ENCODE measurements at regions of chr7 and their contacts with region 1.

Region 1: GRCh38 chr7:87059525-87060287 is at the start of gene ELAPOR2:
- DNase-seq: peak; percentile 98
- H3K4me3 ChIP-seq: peak within 1 kb of the TSS; percentile 81 to 90
- H3K27ac ChIP-seq: peak within 1 kb of the TSS in 1 of 2 experiments; percentile 87; a peak in 2 of 4 replicates
- H3K4me1 ChIP-seq: peaks cover 0 to 14% of the 10 kb centered on the region in 2 experiments; a peak in 2 of 4 replicates
- H3K27me3 ChIP-seq: no peaks in the 10 kb centered on the region
- CTCF ChIP-seq: peak; percentile 55
- EP300 ChIP-seq: peak in 1 of 2 experiments; percentile 29; a peak in 1 of 4 replicates
- RAD21 ChIP-seq: peak; percentile 64
- polyA plus RNA-seq, gene ELAPOR2: 8.8 and 15.9 TPM in 2 replicates

Region 2: GRCh38 chr7:86720306-86720705 is 339.4 kb before region 1 on chr7:
- CTCF ChIA-PET with region 1: no interaction called
- POLR2A ChIA-PET with region 1: no interaction called
- DNase-seq: no peak
- H3K4me3 ChIP-seq: no peak overlapping the region
- H3K27ac ChIP-seq: no peak overlapping the region
- H3K4me1 ChIP-seq: no peaks in the 10 kb centered on the region; a peak in 1 of 4 replicates
- H3K27me3 ChIP-seq: no peaks in the 10 kb centered on the region
- CTCF ChIP-seq: no peak
- EP300 ChIP-seq: no peak
- RAD21 ChIP-seq: no peak

Region 3: DNA sequence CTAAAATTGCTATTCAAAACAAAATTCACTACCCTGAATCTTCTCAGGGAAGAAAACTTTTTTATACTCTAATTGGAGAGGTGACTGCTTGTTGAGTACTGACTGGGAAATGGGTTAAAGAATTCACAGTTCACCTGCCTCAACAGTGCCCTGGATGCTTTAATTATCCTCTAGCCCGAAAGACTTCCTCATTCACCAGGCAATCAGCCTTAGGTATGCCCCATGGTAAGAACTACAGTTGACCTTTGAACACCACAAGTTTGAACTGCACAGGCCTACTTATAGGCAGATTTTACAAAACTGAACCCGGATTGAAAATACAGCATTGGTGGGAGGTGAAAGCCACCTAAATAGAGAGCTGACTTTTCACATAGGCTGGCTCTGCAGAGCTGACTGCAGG is 175.6 kb before region 1 on chr7:
- CTCF ChIA-PET with region 1: no interaction called
- POLR2A ChIA-PET with region 1: no interaction called
- DNase-seq: no peak
- H3K4me3 ChIP-seq: no peak overlapping the region
- H3K27ac ChIP-seq: no peak overlapping the region
- H3K4me1 ChIP-seq: no peaks in the 10 kb centered on the region
- H3K27me3 ChIP-seq: no peaks in the 10 kb centered on the region
- CTCF ChIP-seq: no peak
- EP300 ChIP-seq: no peak
- RAD21 ChIP-seq: no peak

Region 4: DNA sequence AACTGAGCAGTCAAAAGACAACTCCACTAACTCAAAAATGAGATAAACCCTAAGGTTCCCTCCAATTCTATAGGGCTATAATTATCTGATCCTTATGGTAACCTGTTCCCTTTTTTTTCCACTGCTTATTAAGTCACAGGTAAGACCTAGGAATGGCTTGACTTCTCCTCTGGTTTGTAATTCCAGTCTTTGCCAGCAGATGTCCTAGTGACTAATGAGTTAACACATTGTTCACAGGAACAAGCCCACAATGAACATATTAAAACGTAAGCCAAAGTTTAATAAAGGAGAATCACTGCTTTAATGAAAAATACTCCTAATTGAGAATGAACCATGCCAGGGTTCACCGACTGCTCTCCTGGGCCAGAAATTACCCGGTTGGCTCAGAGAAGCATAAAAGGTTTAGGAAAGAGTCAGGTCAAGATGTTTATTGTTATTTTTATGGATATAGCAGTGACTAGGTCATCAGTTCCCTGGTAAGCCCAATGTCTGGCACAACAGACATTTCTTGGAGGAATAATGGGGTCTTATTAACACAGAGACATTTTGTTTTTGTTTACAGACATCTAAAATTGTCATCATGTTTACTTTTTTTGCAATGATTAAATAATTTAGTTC is 120.4 kb before region 1 on chr7:
- CTCF ChIA-PET with region 1: interaction called, 16 read pairs
- POLR2A ChIA-PET with region 1: no interaction called
- DNase-seq: peak; percentile 36
- H3K4me3 ChIP-seq: no peak overlapping the region
- H3K27ac ChIP-seq: no peak overlapping the region
- H3K4me1 ChIP-seq: peaks cover 0 to 11% of the 10 kb centered on the region in 2 experiments; a peak in 2 of 4 replicates
- H3K27me3 ChIP-seq: no peaks in the 10 kb centered on the region
- CTCF ChIP-seq: peak; percentile 91
- EP300 ChIP-seq: no peak
- RAD21 ChIP-seq: peak; percentile 83

Region 5: GRCh38 chr7:87013836-87014182 is 45.9 kb before region 1 on chr7:
- CTCF ChIA-PET with region 1: interaction called, 11 read pairs
- POLR2A ChIA-PET with region 1: no interaction called
- DNase-seq: no peak
- H3K4me3 ChIP-seq: no peak overlapping the region
- H3K27ac ChIP-seq: no peak overlapping the region
- H3K4me1 ChIP-seq: no peaks in the 10 kb centered on the region; a peak in 2 of 4 replicates
- H3K27me3 ChIP-seq: no peaks in the 10 kb centered on the region
- CTCF ChIP-seq: no peak
- EP300 ChIP-seq: no peak
- RAD21 ChIP-seq: no peak

Region 6: DNA sequence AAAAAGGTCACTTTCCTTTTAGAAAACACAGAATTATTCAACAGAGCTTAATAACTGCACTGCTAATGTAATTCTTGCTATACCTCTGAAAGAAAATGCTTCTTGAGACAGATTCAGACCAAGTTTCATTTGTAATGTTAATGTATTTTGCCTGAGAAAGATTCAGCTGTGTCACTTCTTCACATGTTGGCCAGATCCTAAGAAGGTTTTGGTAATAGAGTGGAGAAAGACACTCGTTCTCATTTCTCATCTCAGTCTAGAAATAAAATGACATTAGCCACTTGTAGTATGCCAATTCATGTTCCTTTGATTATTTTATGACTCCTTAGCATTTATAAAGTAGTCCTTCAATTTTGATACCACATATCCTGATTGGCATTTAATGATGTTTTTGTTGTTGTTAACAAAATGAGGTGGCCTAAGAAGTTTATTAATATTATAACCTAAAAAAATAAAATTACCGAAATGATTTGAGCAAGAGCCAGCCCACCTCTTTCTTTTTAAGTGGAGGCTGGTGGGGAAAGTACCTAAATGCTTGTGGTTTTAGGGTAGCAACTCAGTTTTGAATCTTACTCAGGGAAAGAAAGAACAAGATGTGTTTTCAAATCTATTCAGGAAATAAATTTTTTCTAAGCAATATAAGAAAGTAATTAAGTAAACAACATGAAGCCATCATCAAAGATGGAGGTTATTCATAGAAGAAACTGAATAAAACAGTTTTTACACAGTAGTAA is 16.1 kb after region 1 on chr7:
- CTCF ChIA-PET with region 1: interaction called, 12 read pairs
- POLR2A ChIA-PET with region 1: no interaction called
- DNase-seq: no peak
- H3K4me3 ChIP-seq: no peak overlapping the region
- H3K27ac ChIP-seq: no peak overlapping the region
- H3K4me1 ChIP-seq: no peaks in the 10 kb centered on the region
- H3K27me3 ChIP-seq: no peaks in the 10 kb centered on the region; the same call in 1 of the 2 replicates
- CTCF ChIP-seq: no peak
- EP300 ChIP-seq: no peak
- RAD21 ChIP-seq: no peak

Measured in SK-N-SH (cell line).